ENCODE measurements at regions of chr6 and their contacts with region 1.

Region 1: GRCh38 chr6:15090145-15090579 is 155.7 kb upstream of the JARID2 start:
- DNase-seq: peak in 2 of 4 experiments; percentile 90 to 93
- ATAC-seq: peak; percentile 76
- H3K4me3 ChIP-seq: peak overlapping the region; percentile 48
- H3K27ac ChIP-seq: peak overlapping the region; percentile 96
- H3K4me1 ChIP-seq: peaks cover 28 to 49% of the 10 kb centered on the region in 2 experiments
- H3K27me3 ChIP-seq: no peaks in the 10 kb centered on the region; a peak in 1 of 5 replicates
- CTCF ChIP-seq: no peak
- EP300 ChIP-seq: peak; percentile 52
- POLR2A ChIP-seq: peak; percentile 82
- RAD21 ChIP-seq: peak; percentile 18 to 29; a peak in 2 of 4 replicates

Region 2: GRCh38 chr6:14758421-14759081 is 331.6 kb before region 1 on chr6:
- CTCF ChIA-PET with region 1: no interaction called
- POLR2A ChIA-PET with region 1: no interaction called
- in situ Hi-C with region 1: no loop called
- intact Hi-C with region 1: no loop called
- DNase-seq: no peak
- ATAC-seq: no peak
- H3K4me3 ChIP-seq: no peak overlapping the region
- H3K27ac ChIP-seq: no peak overlapping the region
- H3K4me1 ChIP-seq: peaks cover 3 to 19% of the 10 kb centered on the region in 2 experiments; a peak in 4 of 5 replicates
- H3K27me3 ChIP-seq: no peaks in the 10 kb centered on the region
- CTCF ChIP-seq: no peak
- EP300 ChIP-seq: no peak
- POLR2A ChIP-seq: no peak
- RAD21 ChIP-seq: no peak

Region 3: GRCh38 chr6:14865531-14866100 is 224.5 kb before region 1 on chr6:
- CTCF ChIA-PET with region 1: no interaction called
- POLR2A ChIA-PET with region 1: no interaction called
- in situ Hi-C with region 1: no loop called
- intact Hi-C with region 1: loop called (anchors 10 kb)
- DNase-seq: peak in 3 of 4 experiments; percentile 25 to 32 (median 29)
- ATAC-seq: peak; percentile 64
- H3K4me3 ChIP-seq: no peak overlapping the region
- H3K27ac ChIP-seq: no peak overlapping the region
- H3K4me1 ChIP-seq: peaks cover 4 to 31% of the 10 kb centered on the region in 2 experiments; a peak in 4 of 5 replicates
- H3K27me3 ChIP-seq: no peaks in the 10 kb centered on the region
- CTCF ChIP-seq: no peak
- EP300 ChIP-seq: no peak
- POLR2A ChIP-seq: no peak
- RAD21 ChIP-seq: 0 out of 4 replicates have a peak, but pooled peaks of 1 of the 2 experiments have one; percentile 18

Region 4: GRCh38 chr6:14921170-14921569 is 169.0 kb before region 1 on chr6:
- CTCF ChIA-PET with region 1: no interaction called
- POLR2A ChIA-PET with region 1: no interaction called
- in situ Hi-C with region 1: no loop called
- intact Hi-C with region 1: no loop called
- DNase-seq: peak in 3 of 4 experiments; percentile 25 to 28 (median 26)
- ATAC-seq: peak; percentile 63
- H3K4me3 ChIP-seq: no peak overlapping the region
- H3K27ac ChIP-seq: no peak overlapping the region
- H3K4me1 ChIP-seq: peaks cover 5 to 11% of the 10 kb centered on the region in 2 experiments; a peak in 4 of 5 replicates
- H3K27me3 ChIP-seq: no peaks in the 10 kb centered on the region
- CTCF ChIP-seq: no peak
- EP300 ChIP-seq: no peak
- POLR2A ChIP-seq: no peak
- RAD21 ChIP-seq: peak in 1 of 2 experiments; percentile 48; a peak in 2 of 4 replicates

Region 5: DNA sequence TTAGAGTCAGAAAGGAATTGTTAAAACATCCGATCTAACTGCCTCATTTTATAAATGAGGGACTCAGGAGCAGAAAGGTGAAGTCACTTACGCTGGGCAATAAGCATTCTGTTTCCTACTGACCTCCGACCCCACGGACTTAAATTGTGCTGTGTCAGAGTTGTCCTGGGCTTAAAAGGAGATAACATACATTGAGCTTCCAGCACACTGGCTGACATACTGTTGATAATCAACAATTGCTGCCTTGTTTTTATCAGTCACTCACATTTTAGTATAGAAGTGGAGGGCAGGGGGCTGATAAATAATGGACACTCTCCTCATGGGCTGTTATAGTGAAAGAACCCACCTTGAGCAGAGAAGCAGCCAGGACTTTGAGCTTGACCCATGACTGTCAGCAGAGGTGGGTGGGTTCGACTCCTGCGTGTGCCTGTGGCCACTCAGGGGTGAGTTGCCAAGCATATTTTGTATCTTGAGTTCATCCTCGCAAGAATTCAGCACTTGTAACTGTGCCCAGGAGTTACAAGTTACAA is 10.8 kb before region 1 on chr6:
- CTCF ChIA-PET with region 1: no interaction called
- POLR2A ChIA-PET with region 1: interaction called, 10 read pairs
- in situ Hi-C with region 1: no loop called
- intact Hi-C with region 1: no loop called
- DNase-seq: peak in 3 of 4 experiments; percentile 48 to 96 (median 85)
- ATAC-seq: peak; percentile 90
- H3K4me3 ChIP-seq: no peak overlapping the region
- H3K27ac ChIP-seq: peak overlapping the region; percentile 83
- H3K4me1 ChIP-seq: peaks cover 48 to 51% of the 10 kb centered on the region in 2 experiments
- H3K27me3 ChIP-seq: no peaks in the 10 kb centered on the region
- CTCF ChIP-seq: no peak; a peak in 1 of 6 replicates
- EP300 ChIP-seq: peak; percentile 97
- POLR2A ChIP-seq: no peak
- RAD21 ChIP-seq: peak in 1 of 2 experiments; percentile 37; a peak in 1 of 4 replicates

Region 6: DNA sequence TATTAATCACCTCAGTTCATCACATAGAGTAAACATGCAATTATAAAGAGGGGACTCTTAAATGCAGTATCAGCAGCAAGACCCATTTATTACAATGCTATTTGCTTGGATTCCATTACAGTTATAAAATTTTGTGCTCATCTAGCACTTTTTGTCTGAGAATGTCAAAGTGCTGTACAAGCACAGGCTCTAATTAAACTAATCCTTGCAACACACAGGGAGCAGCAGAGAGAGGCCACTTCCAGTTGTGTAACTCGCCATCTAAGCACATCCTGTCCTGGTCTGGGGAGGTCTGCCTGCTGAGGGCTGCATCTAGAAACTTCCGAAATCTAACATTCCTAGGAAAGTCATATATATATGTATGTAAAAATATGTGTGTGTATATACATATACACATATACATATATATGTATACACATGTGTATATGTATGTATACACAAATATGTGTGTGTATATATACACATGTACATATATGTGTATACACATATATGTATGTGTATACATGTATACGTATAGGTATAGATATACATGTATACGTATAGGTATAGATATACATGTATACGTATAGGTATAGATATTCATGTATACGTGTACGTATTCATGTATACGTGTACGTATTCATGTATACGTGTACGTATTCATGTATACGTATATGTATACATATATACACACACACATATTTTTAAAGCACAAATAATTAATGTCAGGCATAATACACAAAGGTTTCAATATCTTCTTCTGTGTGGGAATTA is 19.4 kb after region 1 on chr6:
- CTCF ChIA-PET with region 1: no interaction called
- POLR2A ChIA-PET with region 1: interaction called, 35 read pairs
- in situ Hi-C with region 1: no loop called
- intact Hi-C with region 1: no loop called
- DNase-seq: no peak
- ATAC-seq: no peak
- H3K4me3 ChIP-seq: no peak overlapping the region
- H3K27ac ChIP-seq: no peak overlapping the region
- H3K4me1 ChIP-seq: peaks cover 8 to 25% of the 10 kb centered on the region in 2 experiments
- H3K27me3 ChIP-seq: no peaks in the 10 kb centered on the region
- CTCF ChIP-seq: no peak
- EP300 ChIP-seq: no peak
- POLR2A ChIP-seq: no peak
- RAD21 ChIP-seq: no peak